HEK293 (cell line): ENCODE measurements at regions of chr1 and their contacts with region 1.

Region 1: DNA sequence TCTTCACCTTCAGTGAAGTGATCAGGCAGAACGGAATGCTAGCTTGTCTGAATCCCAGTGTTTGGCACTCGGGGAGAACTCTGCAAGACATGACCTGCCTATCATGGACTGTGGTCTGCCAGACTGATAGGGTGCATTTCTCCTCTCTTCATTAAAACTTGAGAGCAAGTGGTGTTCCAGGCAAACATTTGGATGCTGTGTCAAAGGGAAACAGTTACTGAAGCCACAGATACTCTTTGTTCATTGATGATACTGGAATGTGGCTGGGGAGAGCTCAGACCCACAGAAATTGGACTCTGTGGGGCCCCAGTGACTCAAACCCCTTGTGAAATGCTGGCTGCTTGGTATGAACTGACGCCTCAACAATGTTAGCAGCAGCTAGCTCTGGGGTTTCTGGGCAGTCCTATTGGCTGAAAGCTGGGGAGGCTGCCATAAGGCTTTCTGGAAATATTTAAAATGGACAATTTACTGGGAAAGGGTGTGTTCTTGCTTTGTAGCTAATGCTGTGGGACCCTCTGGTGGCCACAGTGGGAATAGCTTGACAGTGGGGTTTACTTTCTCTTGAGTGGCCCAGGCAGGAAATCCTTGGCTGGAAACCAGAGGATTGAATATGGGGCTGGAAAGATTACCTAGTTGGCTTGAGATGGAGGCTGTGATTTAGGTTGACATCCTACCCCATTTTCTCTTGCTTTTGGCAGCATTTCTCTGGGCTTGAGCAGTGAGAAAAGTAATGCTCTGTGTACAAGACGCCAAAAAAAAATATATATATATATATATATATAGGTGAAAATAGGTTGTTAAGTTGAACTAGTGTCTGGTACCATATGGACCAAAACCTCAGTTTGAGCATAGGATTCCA is 8.0 kb upstream of the S100A10 start:
- H3K4me3 ChIP-seq: no peak overlapping the region
- H3K27ac ChIP-seq: no peak overlapping the region
- H3K4me1 ChIP-seq: no peaks in the 10 kb centered on the region
- CTCF ChIP-seq: peak; percentile 73; the same call in 1 of the 2 replicates

Region 2: DNA sequence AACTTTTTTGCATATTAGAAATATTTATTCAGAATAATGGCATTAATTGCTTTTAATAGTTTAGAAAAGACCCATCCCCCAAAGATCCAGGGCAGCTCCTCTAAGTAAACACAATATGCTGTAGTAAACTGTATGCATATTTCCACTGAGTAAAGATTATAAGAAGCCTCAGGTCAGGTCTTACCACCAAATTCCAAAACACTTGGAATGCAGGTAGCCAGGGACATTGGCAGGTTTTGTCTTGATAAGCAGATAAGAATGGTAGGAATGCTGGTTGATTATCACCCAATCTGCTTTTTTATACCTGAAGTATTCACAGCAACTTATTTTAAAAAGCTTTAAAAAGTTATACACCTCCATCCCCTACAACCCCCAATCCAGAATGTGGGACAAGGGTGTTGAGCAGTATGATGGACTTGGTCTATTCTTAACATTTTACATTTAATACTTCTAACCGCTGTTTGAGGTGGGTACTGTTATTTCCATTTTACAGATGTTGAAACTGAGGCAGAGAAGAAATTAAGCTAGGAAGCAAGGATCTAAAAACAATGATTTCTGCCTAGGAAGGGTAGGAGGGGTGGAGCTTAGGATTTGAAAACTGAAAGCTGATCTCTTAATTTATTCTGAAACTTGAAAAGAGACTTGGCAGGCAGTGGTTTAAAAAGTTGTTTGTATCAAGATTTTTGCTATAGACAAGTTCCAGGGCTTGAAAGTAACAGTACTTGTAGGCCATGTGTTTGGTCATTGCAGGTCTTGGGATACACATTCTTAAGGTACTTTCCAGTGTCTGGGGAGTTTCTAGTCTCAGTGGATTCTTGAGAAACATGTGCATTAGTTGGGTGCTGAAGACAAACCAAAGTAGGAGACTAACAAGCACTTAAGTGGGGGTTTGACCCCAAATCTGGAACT is 76.7 kb before region 1 on chr1:
- CTCF ChIA-PET with region 1: interaction called, 301 read pairs
- POLR2A ChIA-PET with region 1: no interaction called
- H3K4me3 ChIP-seq: no peak overlapping the region
- H3K27ac ChIP-seq: no peak overlapping the region
- H3K4me1 ChIP-seq: no peaks in the 10 kb centered on the region
- CTCF ChIP-seq: no peak

Region 3: GRCh38 chr1:151968058-151968457 is 33.6 kb before region 1 on chr1:
- CTCF ChIA-PET with region 1: interaction called, 409 read pairs
- POLR2A ChIA-PET with region 1: interaction called, 6 read pairs
- H3K4me3 ChIP-seq: no peak overlapping the region
- H3K27ac ChIP-seq: no peak overlapping the region; the same call in 1 of the 2 replicates
- H3K4me1 ChIP-seq: peaks cover 8% of the 10 kb centered on the region; the same call in 1 of the 2 replicates
- CTCF ChIP-seq: peak; percentile 91

Region 4: GRCh38 chr1:151984313-151984956 is 17.2 kb before region 1 on chr1:
- CTCF ChIA-PET with region 1: interaction called, 51 read pairs
- POLR2A ChIA-PET with region 1: interaction called, 3 read pairs
- H3K4me3 ChIP-seq: no peak overlapping the region
- H3K27ac ChIP-seq: no peak overlapping the region
- H3K4me1 ChIP-seq: peaks cover 32% of the 10 kb centered on the region
- CTCF ChIP-seq: no peak